Activated naive CD4-positive, alpha-beta T cell treated with anti-CD3 and anti-CD28 coated beads for 36 hours (primary cell): ENCODE measurements at regions of chr6 and their contacts with region 1.

Region 1: GRCh38 chr6:85460921-85461797 is 11.3 kb downstream of the NT5E start:
- DNase-seq: peak; percentile 67
- H3K4me3 Mint-ChIP-seq: no peak overlapping the region
- H3K27ac Mint-ChIP-seq: peak overlapping the region; percentile 81
- H3K4me1 Mint-ChIP-seq: peaks cover 65% of the 10 kb centered on the region
- H3K27me3 Mint-ChIP-seq: peaks cover 6% of the 10 kb centered on the region

Region 2: GRCh38 chr6:85360794-85361642 is 100.1 kb before region 1 on chr6:
- CTCF ChIA-PET with region 1: no interaction called
- intact Hi-C with region 1: loop called (anchors 1 kb)
- DNase-seq: no peak
- H3K4me3 Mint-ChIP-seq: no peak overlapping the region
- H3K27ac Mint-ChIP-seq: no peak overlapping the region
- H3K4me1 Mint-ChIP-seq: peaks cover 2% of the 10 kb centered on the region
- H3K27me3 Mint-ChIP-seq: peaks cover 2% of the 10 kb centered on the region

Region 3: GRCh38 chr6:85449818-85450759 is 11.1 kb before region 1 on chr6 and contains the start of gene NT5E:
- CTCF ChIA-PET with region 1: interaction called, 11 read pairs
- intact Hi-C with region 1: loop called (anchors 1 kb)
- DNase-seq: peak; percentile 37
- H3K4me3 Mint-ChIP-seq: peak within 1 kb of the TSS; percentile 76
- H3K27ac Mint-ChIP-seq: peak within 1 kb of the TSS; percentile 63
- H3K4me1 Mint-ChIP-seq: peaks cover 27% of the 10 kb centered on the region
- H3K27me3 Mint-ChIP-seq: peaks cover 52% of the 10 kb centered on the region
- total RNA-seq, gene NT5E: 0.55 to 1.4 TPM

Region 4: DNA sequence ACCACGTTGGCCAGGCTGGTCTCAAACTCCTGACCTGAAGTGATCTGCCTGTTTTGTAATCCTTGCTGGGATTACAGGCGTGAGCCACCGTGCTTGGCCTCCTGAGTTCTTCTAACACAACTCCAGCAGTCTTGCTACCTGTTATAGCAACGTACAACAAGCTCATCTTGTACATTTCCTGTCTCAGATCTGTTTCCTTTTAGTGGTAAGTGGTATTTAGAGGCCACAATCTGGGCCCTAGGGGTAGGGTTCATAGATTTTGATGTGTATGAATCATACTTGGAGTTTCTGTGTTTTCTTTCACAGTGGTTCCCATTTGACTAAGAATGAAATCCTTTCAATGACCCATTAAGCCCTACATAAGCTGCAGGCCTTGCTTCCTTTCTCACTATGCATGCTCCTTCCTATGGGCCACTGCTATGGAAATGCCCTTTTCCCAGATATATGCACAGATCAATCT is 208.6 kb after region 1 on chr6:
- CTCF ChIA-PET with region 1: no interaction called
- intact Hi-C with region 1: loop called (anchors 2 kb)
- DNase-seq: peak; percentile 55
- H3K4me3 Mint-ChIP-seq: peak overlapping the region; percentile 52
- H3K27ac Mint-ChIP-seq: peak overlapping the region; percentile 87
- H3K4me1 Mint-ChIP-seq: peaks cover 50% of the 10 kb centered on the region
- H3K27me3 Mint-ChIP-seq: no peaks in the 10 kb centered on the region

Region 5: DNA sequence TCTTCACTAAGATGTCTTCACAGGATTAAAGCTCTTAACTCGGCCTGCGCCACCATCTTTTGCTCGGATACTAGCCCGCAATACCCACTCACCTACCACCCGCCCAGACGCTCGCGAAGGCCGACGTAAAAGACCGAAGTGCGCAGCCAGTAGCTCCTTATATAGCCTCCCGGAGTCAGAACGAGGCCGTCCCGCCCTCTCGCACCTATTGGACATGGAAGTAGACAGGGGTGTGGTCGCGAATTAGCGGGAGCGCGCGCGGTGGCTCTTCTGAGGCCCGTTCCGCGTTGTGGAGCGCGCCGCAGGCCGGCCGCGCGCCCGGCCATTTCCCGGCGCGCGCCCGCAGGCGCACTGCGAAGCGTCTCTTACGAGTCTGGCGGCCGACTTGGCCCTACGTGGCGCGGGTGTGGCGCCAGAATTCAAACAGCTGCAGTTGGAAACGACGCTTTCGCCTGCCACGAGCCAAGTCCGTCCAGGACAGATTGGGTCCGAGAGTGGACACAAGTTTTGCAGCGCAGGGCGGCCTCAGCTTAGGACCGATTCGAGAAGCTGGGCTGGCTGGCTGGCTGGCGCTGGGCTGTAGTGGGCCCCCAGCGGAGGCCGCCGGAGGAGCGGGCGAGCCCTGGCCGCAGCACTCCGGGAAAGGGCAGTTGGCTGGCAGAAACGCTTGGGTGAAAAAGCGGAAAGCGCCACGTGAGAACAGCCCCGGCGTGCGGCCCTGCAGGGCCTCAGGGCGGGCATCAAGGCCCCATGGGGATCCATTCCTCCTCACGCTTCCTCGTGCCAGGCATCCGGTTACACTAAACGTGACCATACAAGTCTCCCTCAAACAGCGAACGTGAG is 217.7 kb after region 1 on chr6:
- CTCF ChIA-PET with region 1: no interaction called
- intact Hi-C with region 1: loop called (anchors 2 kb)
- DNase-seq: peak; percentile 96
- H3K4me3 Mint-ChIP-seq: peak overlapping the region; percentile 97
- H3K27ac Mint-ChIP-seq: peak overlapping the region; percentile 96
- H3K4me1 Mint-ChIP-seq: peaks cover 31% of the 10 kb centered on the region
- H3K27me3 Mint-ChIP-seq: no peaks in the 10 kb centered on the region